ENCODE measurements at regions of chr6 and their contacts with region 1.

Region 1: DNA sequence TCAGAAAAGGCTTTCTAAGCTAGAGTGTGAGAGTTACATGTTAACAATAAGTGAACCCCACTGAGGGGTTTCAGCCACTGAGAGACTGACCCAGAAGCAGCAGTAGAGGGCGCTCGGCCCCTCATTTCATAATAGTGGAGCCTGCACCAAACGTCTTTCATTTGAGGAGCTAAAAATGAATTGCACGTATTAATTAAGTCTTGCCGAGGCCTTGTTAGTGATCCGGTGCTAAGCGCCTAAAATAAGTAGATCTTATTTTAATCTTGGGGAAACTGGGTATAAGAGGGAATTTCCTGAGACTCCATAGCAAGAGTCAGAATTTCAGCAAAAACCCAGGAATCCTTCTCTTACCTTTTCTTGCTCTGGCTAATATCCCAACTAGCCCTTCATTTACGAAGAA is 209.7 kb downstream of the FARS2 start:
- H3K4me3 ChIP-seq: no peak overlapping the region
- H3K27ac ChIP-seq: no peak overlapping the region
- H3K4me1 ChIP-seq: peaks cover 11% of the 10 kb centered on the region
- CTCF ChIP-seq: peak; percentile 45; the same call in 1 of the 2 replicates

Region 2: DNA sequence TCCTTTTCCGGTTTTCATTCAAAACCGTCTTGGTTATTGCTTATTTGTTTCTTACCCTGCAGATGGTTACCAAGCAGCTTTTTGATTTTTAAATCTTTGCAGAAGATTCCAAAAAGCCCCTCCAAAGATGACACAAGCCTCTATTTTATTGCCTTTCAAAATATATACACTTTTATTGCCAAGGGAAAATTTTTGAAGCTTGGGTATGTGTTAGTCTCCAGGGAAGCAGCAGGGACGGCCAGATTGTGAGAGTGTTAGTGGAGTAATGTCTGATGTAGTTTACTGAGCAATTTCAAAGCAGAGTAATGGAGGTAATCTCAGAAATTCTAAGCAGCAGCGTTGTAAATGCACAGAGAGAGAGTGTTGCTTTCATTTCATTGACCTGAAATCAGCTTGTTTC is 15.9 kb before region 1 on chr6:
- CTCF ChIA-PET with region 1: interaction called, 14 read pairs
- POLR2A ChIA-PET with region 1: no interaction called
- H3K4me3 ChIP-seq: no peak overlapping the region
- H3K27ac ChIP-seq: no peak overlapping the region
- H3K4me1 ChIP-seq: no peaks in the 10 kb centered on the region
- CTCF ChIP-seq: no peak

Region 3: GRCh38 chr6:5486214-5486613 is 15.2 kb after region 1 on chr6:
- CTCF ChIA-PET with region 1: interaction called, 35 read pairs
- POLR2A ChIA-PET with region 1: no interaction called
- H3K4me3 ChIP-seq: no peak overlapping the region
- H3K27ac ChIP-seq: no peak overlapping the region
- H3K4me1 ChIP-seq: peaks cover 10% of the 10 kb centered on the region
- CTCF ChIP-seq: no peak